GM13977 (cell line): ENCODE measurements at regions of chr12 and their contacts with region 1.

Region 1: GRCh38 chr12:71947645-71948105 is 9.0 kb downstream of the TPH2 start:
- DNase-seq: no peak
- CTCF ChIP-seq: no peak

Region 2: DNA sequence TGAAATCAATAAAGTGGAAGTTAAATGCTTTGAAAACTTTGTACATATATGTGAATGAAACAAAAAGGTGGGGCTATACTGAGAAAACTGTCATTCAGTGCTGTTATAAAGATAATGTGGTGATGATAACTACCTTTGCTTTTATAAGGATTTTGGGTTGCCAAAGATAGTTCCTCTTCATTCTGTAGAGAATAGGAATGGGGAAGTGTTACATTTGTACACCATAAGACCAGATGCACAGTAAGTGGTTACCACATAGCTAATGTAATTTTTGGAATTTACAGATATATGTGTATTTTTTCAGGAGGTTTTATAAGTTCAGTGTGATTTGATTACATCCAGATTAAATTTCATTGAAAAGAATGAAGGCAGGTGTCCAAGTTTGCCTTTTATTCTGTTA is 174.9 kb before region 1 on chr12:
- in situ Hi-C with region 1: loop called (anchors 10 kb)
- DNase-seq: no peak
- CTCF ChIP-seq: no peak

Region 3: GRCh38 chr12:72368719-72369422 is 421.2 kb after region 1 on chr12:
- in situ Hi-C with region 1: no loop called
- DNase-seq: no peak
- CTCF ChIP-seq: no peak

Region 4: GRCh38 chr12:72523754-72524153 is 576.1 kb after region 1 on chr12:
- in situ Hi-C with region 1: no loop called
- DNase-seq: no peak
- CTCF ChIP-seq: no peak